ENCODE measurements at regions of chr15 and their contacts with region 1.

Region 1: GRCh38 chr15:65101411-65101890 is 13.5 kb downstream of the UBAP1L start:
- DNase-seq: peak; percentile 78
- H3K4me3 ChIP-seq: no peak overlapping the region; a peak in 1 of 4 replicates
- H3K27ac ChIP-seq: no peak overlapping the region
- H3K4me1 ChIP-seq: no peaks in the 10 kb centered on the region
- H3K27me3 ChIP-seq: no peaks in the 10 kb centered on the region
- CTCF ChIP-seq: peak; percentile 74
- EP300 ChIP-seq: no peak
- RAD21 ChIP-seq: peak; percentile 80

Region 2: GRCh38 chr15:65049418-65049840 is 52.0 kb before region 1 on chr15:
- CTCF ChIA-PET with region 1: interaction called, 109 read pairs
- POLR2A ChIA-PET with region 1: interaction called, 3 read pairs
- DNase-seq: peak; percentile 96
- H3K4me3 ChIP-seq: peak overlapping the region; percentile 48 to 71
- H3K27ac ChIP-seq: no peak overlapping the region
- H3K4me1 ChIP-seq: peaks cover 0 to 14% of the 10 kb centered on the region in 2 experiments; a peak in 1 of 4 replicates
- H3K27me3 ChIP-seq: no peaks in the 10 kb centered on the region
- CTCF ChIP-seq: no peak
- EP300 ChIP-seq: no peak
- RAD21 ChIP-seq: no peak

Region 3: GRCh38 chr15:65060641-65061397 is 40.6 kb before region 1 on chr15:
- CTCF ChIA-PET with region 1: interaction called, 109 read pairs
- POLR2A ChIA-PET with region 1: no interaction called
- DNase-seq: no peak
- H3K4me3 ChIP-seq: no peak overlapping the region
- H3K27ac ChIP-seq: no peak overlapping the region
- H3K4me1 ChIP-seq: no peaks in the 10 kb centered on the region
- H3K27me3 ChIP-seq: no peaks in the 10 kb centered on the region
- CTCF ChIP-seq: no peak
- EP300 ChIP-seq: no peak
- RAD21 ChIP-seq: no peak

Region 4: GRCh38 chr15:65086017-65086679 is 15.3 kb before region 1 on chr15:
- CTCF ChIA-PET with region 1: interaction called, 56 read pairs
- POLR2A ChIA-PET with region 1: no interaction called
- DNase-seq: peak; percentile 69
- H3K4me3 ChIP-seq: no peak overlapping the region
- H3K27ac ChIP-seq: no peak overlapping the region
- H3K4me1 ChIP-seq: peaks cover 0 to 35% of the 10 kb centered on the region in 2 experiments; a peak in 1 of 4 replicates
- H3K27me3 ChIP-seq: no peaks in the 10 kb centered on the region
- CTCF ChIP-seq: peak; percentile 57
- EP300 ChIP-seq: no peak
- RAD21 ChIP-seq: peak; percentile 56

Region 5: DNA sequence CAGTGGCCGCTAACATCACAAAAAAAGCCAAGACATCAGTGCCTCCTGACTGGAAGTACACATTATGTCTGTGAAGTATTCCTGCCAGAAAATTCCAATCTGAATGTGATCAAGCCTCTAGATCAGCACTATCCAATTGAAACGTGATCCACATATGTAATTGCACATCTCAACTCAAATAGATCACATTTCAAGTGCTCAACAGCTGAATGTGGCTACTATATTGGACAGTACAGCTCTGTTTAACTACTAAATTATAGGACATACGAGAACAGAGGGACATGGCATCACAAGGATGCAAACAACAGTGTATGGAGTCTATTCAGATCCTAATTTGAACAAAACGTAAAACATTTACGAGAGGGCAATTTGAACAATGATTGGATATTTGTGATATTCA is 14.1 kb after region 1 on chr15:
- CTCF ChIA-PET with region 1: interaction called, 15 read pairs
- POLR2A ChIA-PET with region 1: no interaction called
- DNase-seq: no peak
- H3K4me3 ChIP-seq: no peak overlapping the region
- H3K27ac ChIP-seq: no peak overlapping the region
- H3K4me1 ChIP-seq: peaks cover 0 to 2% of the 10 kb centered on the region in 2 experiments; a peak in 1 of 4 replicates
- H3K27me3 ChIP-seq: no peaks in the 10 kb centered on the region
- CTCF ChIP-seq: no peak
- EP300 ChIP-seq: no peak
- RAD21 ChIP-seq: no peak